ENCODE measurements at regions of chr6 and their contacts with region 1.

Region 1: GRCh38 chr6:116680975-116681808 is at the start of gene KPNA5:
- DNase-seq: peak; percentile 92
- ATAC-seq: peak; percentile 98
- H3K4me3 ChIP-seq: peak within 1 kb of the TSS; percentile 73 to 86 (median 74)
- H3K27ac ChIP-seq: peak within 1 kb of the TSS; percentile 94
- H3K4me1 ChIP-seq: peaks cover 38% of the 10 kb centered on the region
- H3K27me3 ChIP-seq: peaks cover 0 to 3% of the 10 kb centered on the region in 2 experiments; a peak in 1 of 5 replicates
- CTCF ChIP-seq: peak; percentile 19
- EP300 ChIP-seq: no peak
- POLR2A ChIP-seq: peak; percentile 98 to 100
- RAD21 ChIP-seq: peak; percentile 54; the same call in 1 of the 2 replicates
- total RNA-seq, gene KPNA5: 13.0 and 13.1 TPM in 2 replicates

Region 2: GRCh38 chr6:116570856-116571682 is 110.1 kb before region 1 on chr6 and contains the start of gene RWDD1:
- CTCF ChIA-PET with region 1: no interaction called
- POLR2A ChIA-PET with region 1: no interaction called
- in situ Hi-C with region 1: no loop called
- intact Hi-C with region 1: loop called (anchors 2 kb)
- DNase-seq: peak; percentile 99
- ATAC-seq: peak; percentile 94
- H3K4me3 ChIP-seq: peak within 1 kb of the TSS; percentile 89 to 96 (median 92)
- H3K27ac ChIP-seq: peak within 1 kb of the TSS; percentile 90
- H3K4me1 ChIP-seq: peaks cover 35% of the 10 kb centered on the region
- H3K27me3 ChIP-seq: no peaks in the 10 kb centered on the region; a peak in 1 of 5 replicates
- CTCF ChIP-seq: no peak; the same call in 1 of the 2 replicates
- EP300 ChIP-seq: peak; percentile 35 to 43; a peak in 3 of 4 replicates
- POLR2A ChIP-seq: peak; percentile 91 to 94
- RAD21 ChIP-seq: peak; percentile 39
- total RNA-seq, gene RWDD1: 67.1 and 90.5 TPM in 2 replicates

Region 3: GRCh38 chr6:116667623-116668022 is 13.6 kb before region 1 on chr6:
- CTCF ChIA-PET with region 1: no interaction called
- POLR2A ChIA-PET with region 1: interaction called, 10 read pairs
- in situ Hi-C with region 1: no loop called
- intact Hi-C with region 1: loop called (anchors 1 kb)
- DNase-seq: no peak
- ATAC-seq: no peak
- H3K4me3 ChIP-seq: peak overlapping the region; percentile 91 to 100 (median 94)
- H3K27ac ChIP-seq: peak overlapping the region; percentile 66
- H3K4me1 ChIP-seq: peaks cover 41% of the 10 kb centered on the region
- H3K27me3 ChIP-seq: peaks cover 2 to 13% of the 10 kb centered on the region in 2 experiments; a peak in 3 of 5 replicates
- CTCF ChIP-seq: no peak
- EP300 ChIP-seq: no peak
- POLR2A ChIP-seq: no peak
- RAD21 ChIP-seq: no peak

Measured in HepG2 (cell line).